ENCODE measurements at regions of chr5 and their contacts with region 1.

Region 1: DNA sequence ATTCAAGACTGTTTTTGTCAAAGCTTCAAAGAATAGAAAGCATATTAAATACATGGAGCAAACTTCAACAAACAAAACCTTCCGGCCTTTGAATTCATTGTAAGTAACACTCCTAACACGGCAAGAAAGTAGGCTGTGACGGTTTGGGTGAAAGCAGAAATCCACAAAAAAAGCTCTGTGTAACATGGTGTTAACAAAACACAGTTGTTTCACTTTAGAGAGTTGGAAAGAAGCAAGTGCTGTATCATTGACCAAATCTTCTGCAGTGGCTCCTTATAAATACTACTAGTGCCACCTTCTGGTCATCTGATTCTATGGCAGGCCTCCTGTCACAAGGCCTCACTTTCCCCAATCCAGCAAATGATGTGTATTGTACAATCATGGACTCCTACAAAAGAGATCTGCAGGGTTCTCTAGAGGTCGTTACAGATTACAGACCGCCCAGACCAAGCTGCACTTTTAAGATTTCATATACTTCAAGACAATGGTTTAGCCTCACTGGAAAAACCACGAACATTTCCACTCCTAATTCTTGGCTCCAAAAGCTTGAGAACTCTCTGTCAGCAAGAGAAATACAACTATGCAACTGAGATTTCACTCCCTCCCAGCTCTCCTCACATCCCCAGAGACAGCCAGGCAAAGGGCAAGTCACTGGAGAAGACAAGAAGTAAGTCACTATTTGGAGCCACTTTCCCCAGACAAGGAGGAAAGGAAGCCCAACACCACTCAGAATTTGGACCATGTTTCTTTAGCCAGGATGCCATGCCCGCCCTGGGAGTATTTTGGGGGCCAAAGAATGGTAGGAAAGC is 196.2 kb downstream of the DTWD2 start:
- DNase-seq: no peak
- ATAC-seq: peak; percentile 90 to 93

Region 2: GRCh38 chr5:117454716-117455596 is 1337.2 kb before region 1 on chr5:
- intact Hi-C with region 1: loop called in 1 of 2 experiments (anchors 10 kb)
- DNase-seq: peak; percentile 28
- ATAC-seq: peak; percentile 73 to 80

Region 3: DNA sequence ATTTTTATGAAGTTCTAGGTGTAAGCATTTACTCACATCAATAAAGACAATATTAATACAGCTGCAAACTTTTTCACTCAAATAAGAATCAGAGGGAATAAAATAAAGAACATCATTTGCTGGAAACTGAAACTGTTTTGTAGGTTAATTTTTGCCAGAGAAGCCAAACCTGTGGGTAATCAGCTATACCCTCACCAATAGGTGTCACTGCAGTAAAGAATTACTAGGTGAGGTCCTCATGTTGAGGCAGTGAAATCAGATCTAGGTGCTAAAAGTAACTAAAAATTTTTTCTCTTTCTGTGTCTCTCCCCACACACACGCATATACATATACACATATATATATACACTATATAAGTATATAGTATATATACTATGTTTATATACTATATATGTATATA is 1201.2 kb before region 1 on chr5:
- intact Hi-C with region 1: loop called in 1 of 2 experiments (anchors 10 kb)
- DNase-seq: no peak
- ATAC-seq: no peak

Region 4: DNA sequence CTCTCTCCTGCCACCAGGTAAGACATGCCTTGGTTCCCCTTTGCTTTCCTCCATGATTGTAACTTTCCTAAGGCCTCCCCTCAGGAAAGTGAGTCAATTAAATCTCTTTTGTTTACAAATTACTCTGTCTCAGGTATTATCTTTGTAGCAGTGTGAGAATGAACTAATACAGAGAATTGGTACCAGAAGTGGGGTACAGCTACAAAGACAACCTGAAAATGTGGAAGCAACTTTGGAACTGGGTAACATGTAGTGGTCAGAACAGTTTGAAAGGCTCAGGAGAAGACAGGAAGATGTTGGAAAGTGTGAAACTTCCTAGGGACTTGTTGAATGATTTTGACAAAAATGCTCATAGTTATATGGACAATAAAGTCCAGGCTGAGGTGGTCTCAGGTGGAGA is 934.4 kb after region 1 on chr5:
- intact Hi-C with region 1: no loop called
- DNase-seq: no peak
- ATAC-seq: no peak